ENCODE measurements at regions of chr12 and their contacts with region 1.

Region 1: DNA sequence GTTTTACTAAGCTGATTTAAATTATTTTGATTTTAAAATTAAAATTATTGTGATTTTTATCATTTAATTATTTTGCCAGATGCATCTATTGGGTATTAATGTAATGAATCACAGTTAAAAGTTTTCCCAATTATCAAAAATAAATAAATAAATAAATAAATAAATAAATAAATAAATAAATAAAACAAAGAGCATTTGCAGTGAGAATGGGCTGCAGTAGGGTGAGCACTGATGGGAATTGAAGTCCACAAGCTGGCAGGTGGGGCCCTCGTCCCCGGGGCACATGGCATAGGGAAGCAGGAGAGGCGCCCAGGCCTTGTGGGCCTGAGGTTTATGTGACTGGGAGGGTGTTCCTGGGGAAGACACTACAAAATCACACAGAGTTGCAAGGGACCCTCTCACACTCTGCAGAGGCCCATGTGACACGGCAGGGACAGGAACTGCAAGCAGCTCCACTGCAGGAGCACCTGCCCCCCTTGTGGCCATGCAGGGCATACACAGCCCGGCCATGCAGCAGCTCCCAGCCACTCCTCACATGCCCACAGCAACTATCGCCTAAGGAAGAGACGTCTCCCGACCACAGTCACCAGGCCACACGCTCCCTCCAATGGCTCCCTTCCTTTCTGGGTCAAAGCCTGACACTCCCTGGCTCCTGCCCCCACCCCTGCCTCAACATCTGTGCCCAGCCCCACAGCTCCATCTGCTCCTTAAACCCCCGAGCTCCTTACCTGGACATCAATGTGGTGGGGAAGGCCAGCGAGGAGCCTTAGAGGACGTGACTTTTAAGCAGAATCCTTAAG is 256.3 kb upstream of the SFSWAP start:
- DNase-seq: peak; percentile 73 to 79 (median 76)
- ATAC-seq: peak; percentile 99
- H3K4me3 ChIP-seq: no peak overlapping the region
- H3K27ac ChIP-seq: no peak overlapping the region
- H3K4me1 ChIP-seq: peaks cover 5 to 19% of the 10 kb centered on the region in 2 experiments; a peak in 4 of 5 replicates
- H3K27me3 ChIP-seq: peaks cover 20 to 42% of the 10 kb centered on the region in 2 experiments; a peak in 4 of 5 replicates
- CTCF ChIP-seq: peak; percentile 77 to 95 (median 85)
- EP300 ChIP-seq: no peak
- POLR2A ChIP-seq: no peak
- RAD21 ChIP-seq: peak; percentile 61 to 87

Region 2: GRCh38 chr12:131116391-131117117 is 338.1 kb before region 1 on chr12:
- CTCF ChIA-PET with region 1: no interaction called
- POLR2A ChIA-PET with region 1: no interaction called
- in situ Hi-C with region 1: no loop called
- intact Hi-C with region 1: loop called (anchors 10 kb)
- DNase-seq: peak in 1 of 4 experiments; percentile 20
- ATAC-seq: peak; percentile 70; the same call in 2 of the 3 replicates
- H3K4me3 ChIP-seq: no peak overlapping the region
- H3K27ac ChIP-seq: no peak overlapping the region
- H3K4me1 ChIP-seq: peaks cover 0 to 4% of the 10 kb centered on the region in 2 experiments; a peak in 3 of 5 replicates
- H3K27me3 ChIP-seq: peaks cover 0 to 52% of the 10 kb centered on the region in 2 experiments; a peak in 4 of 5 replicates
- CTCF ChIP-seq: peak; percentile 44 to 52 (median 46); a peak in 5 of 6 replicates
- EP300 ChIP-seq: no peak
- POLR2A ChIP-seq: no peak
- RAD21 ChIP-seq: peak in 1 of 2 experiments; percentile 30; a peak in 1 of 4 replicates

Region 3: DNA sequence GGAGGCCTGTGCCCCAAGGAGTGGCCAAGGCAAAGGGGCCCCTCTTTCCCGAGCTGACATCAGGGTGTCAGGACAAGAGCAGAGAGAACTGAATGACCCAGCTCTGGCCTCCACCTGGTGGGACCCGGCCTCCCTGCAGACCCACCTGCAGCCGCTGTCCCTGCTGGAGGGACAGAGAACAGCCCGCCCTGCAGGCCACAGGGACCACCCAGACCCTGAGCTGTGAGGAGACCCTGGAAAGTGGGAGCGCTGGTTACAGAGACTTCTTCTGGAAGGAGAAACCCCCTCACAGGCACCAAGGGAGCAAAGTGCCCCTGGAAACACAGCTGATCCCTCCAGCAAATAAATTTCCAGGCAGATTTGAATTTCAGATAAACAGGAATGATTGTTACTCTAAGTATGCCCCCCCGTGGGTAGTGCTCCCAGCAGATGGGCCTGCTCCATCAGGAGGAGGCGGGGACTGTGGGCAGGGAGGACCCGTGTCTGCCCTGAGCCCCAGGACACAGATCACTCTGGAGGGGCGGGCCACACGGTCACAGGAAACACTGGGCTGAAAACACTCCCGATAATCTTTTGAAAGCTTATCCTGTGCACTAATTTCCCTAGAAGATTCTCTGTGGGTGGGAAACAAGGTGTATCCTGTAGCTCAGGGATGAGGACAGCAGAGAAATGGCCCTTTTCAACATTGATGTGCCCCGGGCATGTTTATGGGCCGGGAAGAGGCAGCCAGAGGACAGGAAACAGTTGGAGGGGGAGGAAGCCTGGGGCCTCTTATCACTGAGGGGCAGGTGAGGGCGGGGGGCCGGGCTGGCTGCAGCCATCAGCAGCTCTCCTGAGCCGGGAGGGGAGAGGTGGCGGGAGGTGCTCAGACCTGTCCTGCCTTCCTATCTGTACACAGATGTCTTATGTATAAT is 224.9 kb before region 1 on chr12:
- CTCF ChIA-PET with region 1: no interaction called
- POLR2A ChIA-PET with region 1: interaction called, 3 read pairs
- in situ Hi-C with region 1: no loop called
- intact Hi-C with region 1: loop called (anchors 10 kb)
- DNase-seq: peak; percentile 81 to 93 (median 86)
- ATAC-seq: peak; percentile 85
- H3K4me3 ChIP-seq: peak overlapping the region; percentile 23
- H3K27ac ChIP-seq: peak overlapping the region; percentile 93
- H3K4me1 ChIP-seq: peaks cover 40 to 55% of the 10 kb centered on the region in 2 experiments
- H3K27me3 ChIP-seq: no peaks in the 10 kb centered on the region
- CTCF ChIP-seq: peak; percentile 1 to 55 (median 15); a peak in 3 of 6 replicates
- EP300 ChIP-seq: peak; percentile 86
- POLR2A ChIP-seq: peak; percentile 71
- RAD21 ChIP-seq: no peak

Region 4: GRCh38 chr12:131327521-131328488 is 126.8 kb before region 1 on chr12:
- CTCF ChIA-PET with region 1: no interaction called
- POLR2A ChIA-PET with region 1: interaction called, 4 read pairs
- in situ Hi-C with region 1: no loop called
- intact Hi-C with region 1: loop called (anchors 10 kb)
- DNase-seq: peak in 1 of 4 experiments; percentile 36
- ATAC-seq: peak; percentile 90
- H3K4me3 ChIP-seq: no peak overlapping the region
- H3K27ac ChIP-seq: no peak overlapping the region
- H3K4me1 ChIP-seq: peaks cover 0 to 10% of the 10 kb centered on the region in 2 experiments; a peak in 2 of 5 replicates
- H3K27me3 ChIP-seq: peaks cover 0 to 5% of the 10 kb centered on the region in 2 experiments; a peak in 2 of 5 replicates
- CTCF ChIP-seq: peak; percentile 40 to 67 (median 61); a peak in 5 of 6 replicates
- EP300 ChIP-seq: no peak
- POLR2A ChIP-seq: no peak
- RAD21 ChIP-seq: peak; percentile 9 to 53; a peak in 2 of 4 replicates

Region 5: DNA sequence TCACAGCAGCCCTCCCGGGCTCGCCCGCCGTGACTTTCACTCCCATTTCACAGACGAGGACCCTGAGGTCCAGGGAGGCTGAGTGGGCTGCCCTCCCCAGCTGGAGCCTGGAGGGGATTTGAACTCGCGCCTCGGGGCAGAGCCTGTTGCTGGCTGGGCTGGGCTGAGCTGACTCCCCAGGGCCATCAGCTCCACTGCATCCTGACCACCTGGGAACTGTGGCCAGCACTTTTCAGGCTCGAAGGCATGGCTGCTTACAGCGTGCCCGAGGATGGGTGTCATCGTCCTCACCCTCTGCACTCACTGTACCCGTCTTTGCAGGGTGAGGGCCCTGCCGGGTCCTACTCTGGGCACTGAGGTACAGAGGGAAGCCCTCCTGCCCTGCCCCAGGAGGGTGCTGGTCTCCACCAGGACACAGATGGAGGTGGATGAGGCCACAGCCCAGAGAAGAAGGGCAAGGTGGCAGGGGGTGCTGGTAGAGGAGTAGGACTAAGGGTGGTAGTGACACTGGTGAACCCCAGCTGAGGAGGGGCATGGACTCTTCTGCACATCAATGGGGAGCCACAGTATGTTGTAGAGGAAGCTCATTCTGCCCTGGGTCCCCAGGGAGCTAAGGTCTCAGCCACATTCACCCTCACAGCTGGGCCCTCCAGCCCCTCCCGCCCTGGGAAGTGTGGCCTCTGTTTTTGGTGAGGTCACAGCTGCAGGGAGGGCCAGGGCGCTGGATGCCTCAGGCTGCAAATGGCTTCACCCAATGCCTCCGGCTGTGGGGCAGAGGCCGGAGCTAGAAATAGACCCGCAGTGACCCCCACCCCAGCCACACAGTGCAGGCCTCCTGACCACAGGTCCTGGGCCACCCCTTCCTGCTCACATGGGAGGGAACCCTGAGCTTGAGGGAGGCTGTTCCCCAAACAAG is 108.8 kb before region 1 on chr12:
- CTCF ChIA-PET with region 1: no interaction called
- POLR2A ChIA-PET with region 1: interaction called, 3 read pairs
- in situ Hi-C with region 1: no loop called
- intact Hi-C with region 1: loop called (anchors 5 kb)
- DNase-seq: no peak
- ATAC-seq: 0 out of 3 replicates have a peak, but pooled peaks have one; percentile 8
- H3K4me3 ChIP-seq: no peak overlapping the region
- H3K27ac ChIP-seq: no peak overlapping the region
- H3K4me1 ChIP-seq: peaks cover 29 to 30% of the 10 kb centered on the region in 2 experiments; a peak in 4 of 5 replicates
- H3K27me3 ChIP-seq: no peaks in the 10 kb centered on the region
- CTCF ChIP-seq: no peak
- EP300 ChIP-seq: no peak
- POLR2A ChIP-seq: no peak
- RAD21 ChIP-seq: no peak

Region 6: GRCh38 chr12:131390384-131391334 is 64.0 kb before region 1 on chr12:
- CTCF ChIA-PET with region 1: no interaction called
- POLR2A ChIA-PET with region 1: no interaction called
- in situ Hi-C with region 1: no loop called
- intact Hi-C with region 1: loop called (anchors 5 kb)
- DNase-seq: peak; percentile 46 to 59 (median 51)
- ATAC-seq: peak; percentile 80
- H3K4me3 ChIP-seq: no peak overlapping the region
- H3K27ac ChIP-seq: no peak overlapping the region
- H3K4me1 ChIP-seq: peaks cover 0 to 23% of the 10 kb centered on the region in 2 experiments; a peak in 2 of 5 replicates
- H3K27me3 ChIP-seq: peaks cover under 1 to 22% of the 10 kb centered on the region in 2 experiments; a peak in 3 of 5 replicates
- CTCF ChIP-seq: peak in 2 of 3 experiments; percentile 7 to 20; a peak in 2 of 6 replicates
- EP300 ChIP-seq: no peak
- POLR2A ChIP-seq: no peak
- RAD21 ChIP-seq: no peak

Region 7: DNA sequence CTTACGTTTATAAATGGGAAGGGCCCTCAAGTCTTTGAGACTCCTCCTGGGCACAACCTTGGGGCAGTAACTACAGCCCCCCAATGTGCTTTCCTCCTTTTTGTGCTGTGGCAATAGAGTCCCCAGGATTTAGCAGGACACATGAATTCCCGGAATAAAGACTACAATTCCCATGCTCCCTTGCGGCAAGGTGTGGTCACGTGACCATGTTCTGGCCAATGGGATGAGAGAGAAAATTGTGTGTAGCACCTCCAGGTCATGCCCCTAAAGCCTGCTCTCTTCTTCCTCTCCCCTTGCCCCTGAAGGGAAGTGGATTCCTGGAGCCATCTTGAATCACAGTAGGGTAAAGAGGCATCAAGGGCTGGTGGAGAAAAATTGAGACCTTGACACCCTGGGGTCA is 38.8 kb before region 1 on chr12:
- CTCF ChIA-PET with region 1: no interaction called
- POLR2A ChIA-PET with region 1: no interaction called
- in situ Hi-C with region 1: no loop called
- intact Hi-C with region 1: no loop called
- DNase-seq: peak; percentile 70 to 96 (median 94)
- ATAC-seq: peak; percentile 67
- H3K4me3 ChIP-seq: no peak overlapping the region
- H3K27ac ChIP-seq: no peak overlapping the region
- H3K4me1 ChIP-seq: no peaks in the 10 kb centered on the region
- H3K27me3 ChIP-seq: peaks cover 2 to 30% of the 10 kb centered on the region in 2 experiments; a peak in 2 of 5 replicates
- CTCF ChIP-seq: no peak
- EP300 ChIP-seq: no peak
- POLR2A ChIP-seq: no peak
- RAD21 ChIP-seq: no peak

Region 8: DNA sequence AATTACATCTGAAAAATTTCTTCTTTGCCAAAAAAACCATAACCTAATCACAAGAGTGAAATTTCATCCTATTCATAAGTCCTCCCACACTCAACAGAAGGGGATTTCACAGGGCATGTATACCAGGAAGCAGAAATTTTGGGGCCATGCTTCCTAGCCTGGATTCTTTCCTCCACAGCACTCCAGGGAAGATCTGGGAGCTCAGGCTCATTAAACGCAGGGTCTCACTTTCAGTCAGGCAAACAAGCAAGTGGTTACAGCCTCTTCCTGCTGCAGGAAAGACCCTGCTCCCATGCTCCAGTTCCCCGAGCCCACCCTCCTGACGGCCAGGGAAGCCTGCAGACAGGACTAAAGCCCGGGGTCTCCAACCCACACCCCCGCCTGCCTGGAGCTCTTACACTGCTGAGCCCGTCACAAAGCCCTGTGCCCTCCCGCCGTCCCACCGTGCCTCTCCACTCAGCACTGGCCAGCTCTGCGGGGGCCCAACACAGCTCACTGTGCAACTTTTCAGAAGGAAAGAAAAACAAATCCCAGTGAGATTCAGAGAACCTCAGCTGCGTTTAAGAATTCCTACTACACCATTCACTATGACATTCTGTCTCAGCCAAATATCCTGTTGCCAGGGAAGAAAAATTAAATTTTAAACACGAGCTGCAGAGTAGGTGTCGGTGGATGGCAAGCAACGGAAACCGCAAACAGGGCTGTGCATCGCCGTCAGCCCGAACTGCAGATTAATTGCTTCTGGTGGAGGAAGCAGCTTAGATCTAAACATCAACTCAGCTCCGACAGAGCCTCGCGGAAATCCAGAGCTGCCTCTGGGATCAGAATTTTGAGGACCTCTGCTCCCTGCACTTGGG is 149.5 kb after region 1 on chr12:
- CTCF ChIA-PET with region 1: no interaction called
- POLR2A ChIA-PET with region 1: no interaction called
- in situ Hi-C with region 1: no loop called
- intact Hi-C with region 1: no loop called
- DNase-seq: peak in 1 of 4 experiments; percentile 31
- ATAC-seq: peak; percentile 62
- H3K4me3 ChIP-seq: no peak overlapping the region
- H3K27ac ChIP-seq: peak overlapping the region; percentile 21; the same call in 1 of the 3 replicates
- H3K4me1 ChIP-seq: peaks cover 8 to 31% of the 10 kb centered on the region in 2 experiments
- H3K27me3 ChIP-seq: peaks cover 0 to 13% of the 10 kb centered on the region in 2 experiments; a peak in 2 of 5 replicates
- CTCF ChIP-seq: no peak
- EP300 ChIP-seq: 0 out of 2 replicates have a peak, but pooled peaks have one; percentile 10
- POLR2A ChIP-seq: no peak
- RAD21 ChIP-seq: no peak